ENCODE measurements at regions of chr17 and their contacts with region 1.

Region 1: GRCh38 chr17:19672009-19672750 is 23.6 kb downstream of the ALDH3A2 start:
- DNase-seq: no peak
- H3K4me3 ChIP-seq: no peak overlapping the region
- H3K27ac ChIP-seq: no peak overlapping the region
- H3K27me3 ChIP-seq: no peaks in the 10 kb centered on the region
- CTCF ChIP-seq: peak; percentile 51

Region 2: GRCh38 chr17:19513897-19514488 is 158.2 kb before region 1 on chr17:
- CTCF ChIA-PET with region 1: interaction called, 12 read pairs
- POLR2A ChIA-PET with region 1: no interaction called
- DNase-seq: peak; percentile 24
- H3K4me3 ChIP-seq: no peak overlapping the region
- H3K27ac ChIP-seq: no peak overlapping the region
- H3K27me3 ChIP-seq: peaks cover 8% of the 10 kb centered on the region
- CTCF ChIP-seq: peak; percentile 94

Region 3: DNA sequence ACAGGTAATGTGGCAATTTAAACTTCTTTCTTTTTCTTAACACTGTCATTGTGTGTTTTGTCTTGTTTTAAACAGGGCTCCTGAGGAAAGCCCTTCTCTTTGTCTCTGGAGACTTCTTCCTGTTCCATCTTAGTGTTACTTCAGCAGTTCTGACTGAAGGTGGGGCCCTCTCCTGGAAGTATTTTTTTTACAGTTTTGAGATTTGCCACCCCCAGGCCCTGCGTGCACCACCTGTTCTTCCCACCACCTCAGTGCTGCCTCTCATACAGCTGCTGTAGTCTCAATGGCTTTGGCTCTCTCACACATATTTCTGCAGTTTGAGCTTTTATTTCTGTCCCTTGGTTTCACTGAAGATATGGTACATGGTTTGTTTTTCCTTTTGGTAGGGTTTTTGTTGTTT is 128.4 kb after region 1 on chr17:
- CTCF ChIA-PET with region 1: no interaction called
- POLR2A ChIA-PET with region 1: no interaction called
- DNase-seq: no peak
- H3K4me3 ChIP-seq: no peak overlapping the region
- H3K27ac ChIP-seq: no peak overlapping the region
- H3K27me3 ChIP-seq: no peaks in the 10 kb centered on the region
- CTCF ChIP-seq: no peak

Region 4: GRCh38 chr17:19937522-19937921 is 265.3 kb after region 1 on chr17:
- CTCF ChIA-PET with region 1: no interaction called
- POLR2A ChIA-PET with region 1: no interaction called
- DNase-seq: no peak
- H3K4me3 ChIP-seq: no peak overlapping the region
- H3K27ac ChIP-seq: no peak overlapping the region
- H3K27me3 ChIP-seq: no peaks in the 10 kb centered on the region
- CTCF ChIP-seq: no peak